CD8-positive, alpha-beta T cell (primary cell): ENCODE measurements at regions of chr6 and their contacts with region 1.

Region 1: DNA sequence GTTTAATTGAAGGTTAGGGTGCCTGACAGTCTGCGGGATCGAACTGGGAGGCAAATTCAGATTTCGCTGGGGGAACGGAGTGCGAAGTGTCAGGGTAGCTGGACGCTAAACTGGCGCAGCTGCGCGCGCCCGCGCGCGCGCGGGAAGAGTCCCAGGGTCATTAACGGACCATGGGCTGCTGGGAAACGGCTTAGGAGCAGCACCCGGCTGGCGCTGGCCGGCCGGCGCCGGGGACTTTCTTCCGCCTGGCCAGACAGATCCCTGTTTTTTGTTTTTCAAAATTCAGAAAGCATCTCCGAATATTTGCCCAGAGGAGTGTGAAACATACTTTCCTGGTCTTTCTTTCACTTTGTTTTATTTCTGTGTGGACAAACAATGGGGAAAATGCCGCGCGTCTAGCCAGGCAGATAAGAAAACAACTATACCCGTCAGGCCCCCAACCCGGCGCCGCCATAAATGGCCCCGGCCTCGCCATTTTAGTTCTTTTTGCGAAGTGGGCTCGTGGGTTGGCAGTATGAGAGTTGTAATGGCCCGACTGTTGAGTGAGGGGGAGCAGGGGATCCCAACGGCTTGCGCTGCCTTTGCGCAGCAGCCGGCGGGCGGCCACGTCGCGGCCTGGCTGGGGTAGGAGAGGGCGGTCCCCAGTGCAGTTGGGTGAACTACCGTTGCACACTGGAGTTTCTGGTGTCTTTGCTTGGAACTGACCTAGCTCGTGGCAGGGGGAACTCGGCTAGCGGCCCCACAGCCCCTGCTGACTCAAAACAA is 7.1 kb downstream of the HSPA1B start:
- DNase-seq: peak; percentile 70 to 89 (median 81)
- ATAC-seq: peak; percentile 75
- H3K4me3 ChIP-seq: peak overlapping the region; percentile 84 to 97
- H3K4me3 Mint-ChIP-seq: peak overlapping the region; percentile 98
- H3K27ac ChIP-seq: peak overlapping the region; percentile 93 to 99
- H3K27ac Mint-ChIP-seq: peak overlapping the region; percentile 99
- H3K4me1 ChIP-seq: peaks cover 42% of the 10 kb centered on the region
- H3K4me1 Mint-ChIP-seq: peaks cover 59% of the 10 kb centered on the region
- H3K27me3 ChIP-seq: no peaks in the 10 kb centered on the region
- H3K27me3 Mint-ChIP-seq: no peaks in the 10 kb centered on the region
- CTCF ChIP-seq: no peak

Region 2: GRCh38 chr6:31665501-31666336 is 168.9 kb before region 1 on chr6 and contains the start of gene CSNK2B:
- CTCF ChIA-PET with region 1: interaction called, 6 read pairs
- POLR2A ChIA-PET with region 1: interaction called, 3 read pairs
- intact Hi-C with region 1: loop called (anchors 1 to 5 kb)
- DNase-seq: peak; percentile 95 to 99 (median 98)
- ATAC-seq: peak; percentile 84
- H3K4me3 ChIP-seq: peak within 1 kb of the TSS; percentile 91 to 94
- H3K4me3 Mint-ChIP-seq: peak within 1 kb of the TSS; percentile 95
- H3K27ac ChIP-seq: peak within 1 kb of the TSS; percentile 96 to 99
- H3K27ac Mint-ChIP-seq: peak within 1 kb of the TSS; percentile 98
- H3K4me1 ChIP-seq: peaks cover 44% of the 10 kb centered on the region
- H3K4me1 Mint-ChIP-seq: peaks cover 56% of the 10 kb centered on the region
- H3K27me3 ChIP-seq: no peaks in the 10 kb centered on the region
- H3K27me3 Mint-ChIP-seq: no peaks in the 10 kb centered on the region
- CTCF ChIP-seq: no peak
- total RNA-seq, gene CSNK2B: 80.9 to 86.1 TPM

Region 3: DNA sequence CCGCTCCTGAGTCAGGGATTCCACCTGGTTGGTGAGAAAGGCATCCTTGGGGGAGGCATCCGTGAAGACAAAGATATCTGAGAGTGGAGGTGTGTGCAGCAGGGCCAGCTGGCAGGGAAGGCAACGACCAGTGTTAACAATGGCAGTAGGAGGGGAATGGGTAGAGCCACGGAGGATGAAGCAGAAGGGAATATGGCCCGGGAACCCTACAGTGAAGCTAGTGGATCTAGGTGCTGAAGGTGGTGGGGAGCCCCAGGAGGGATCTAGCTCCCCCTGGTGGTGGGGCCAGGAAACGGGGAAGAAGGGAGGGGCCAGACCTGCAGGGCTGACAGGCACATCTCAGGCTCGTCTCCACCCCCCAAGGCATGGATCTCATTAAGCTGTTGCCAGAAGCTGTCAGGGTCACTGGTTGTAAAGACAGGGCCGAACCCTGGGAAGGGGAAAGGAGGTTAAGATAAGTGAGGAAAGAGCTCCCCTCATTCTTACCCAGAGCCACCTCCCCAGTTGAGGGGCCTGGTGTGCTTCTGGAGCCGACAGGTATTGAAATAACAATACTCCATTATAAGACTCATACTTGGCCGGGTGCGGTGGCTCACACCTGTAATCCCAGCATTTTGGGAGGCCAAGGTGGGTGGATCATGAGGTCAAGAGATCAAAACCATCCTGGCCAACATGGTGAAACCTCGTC is 64.8 kb before region 1 on chr6:
- CTCF ChIA-PET with region 1: interaction called, 10 read pairs
- POLR2A ChIA-PET with region 1: interaction called, 3 read pairs
- intact Hi-C with region 1: no loop called
- DNase-seq: peak; percentile 63 to 86 (median 80)
- ATAC-seq: peak; percentile 87
- H3K4me3 ChIP-seq: no peak overlapping the region
- H3K4me3 Mint-ChIP-seq: no peak overlapping the region
- H3K27ac ChIP-seq: no peak overlapping the region
- H3K27ac Mint-ChIP-seq: no peak overlapping the region
- H3K4me1 ChIP-seq: peaks cover 25% of the 10 kb centered on the region
- H3K4me1 Mint-ChIP-seq: peaks cover 27% of the 10 kb centered on the region
- H3K27me3 ChIP-seq: no peaks in the 10 kb centered on the region
- H3K27me3 Mint-ChIP-seq: no peaks in the 10 kb centered on the region
- CTCF ChIP-seq: peak; percentile 60

Region 4: DNA sequence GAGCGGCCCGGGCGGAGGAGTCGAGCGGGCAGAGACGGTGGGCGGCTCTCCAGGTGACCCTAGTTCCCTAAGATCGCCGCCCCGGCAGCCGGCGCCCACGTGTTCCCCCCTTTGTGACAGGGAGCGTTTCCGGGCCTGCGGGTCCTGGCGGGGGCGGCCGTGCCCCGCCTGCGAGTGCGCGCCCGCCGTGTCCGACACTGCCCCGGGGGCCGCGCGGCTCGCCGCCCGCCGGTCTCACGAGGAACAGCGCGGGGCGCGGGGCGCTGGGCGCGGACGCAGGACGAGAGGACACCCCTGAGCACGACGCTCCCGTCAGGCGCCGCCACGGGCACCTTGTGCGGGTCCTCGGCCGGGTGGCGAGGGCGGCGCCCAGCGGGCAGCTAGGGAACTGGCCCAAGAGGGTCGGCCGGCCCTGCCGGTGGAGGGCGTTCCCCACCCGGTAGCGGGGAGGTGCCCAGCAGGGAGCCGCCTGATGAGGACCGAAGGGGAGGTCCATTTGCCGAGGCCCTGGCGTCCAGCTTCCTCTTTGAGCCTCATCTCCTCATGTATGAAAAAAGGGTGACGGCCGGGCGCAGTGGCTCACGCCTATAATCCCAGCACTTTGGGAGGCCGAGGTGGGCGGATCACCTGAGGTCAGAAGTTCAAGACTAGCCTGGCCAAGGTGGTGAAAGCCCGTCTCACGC is 38.9 kb before region 1 on chr6 and contains the start of gene VARS1:
- CTCF ChIA-PET with region 1: interaction called, 5 read pairs
- POLR2A ChIA-PET with region 1: interaction called, 8 read pairs
- intact Hi-C with region 1: loop called in 1 of 2 experiments (anchors 2 kb)
- DNase-seq: peak; percentile 68 to 93 (median 83)
- ATAC-seq: peak; percentile 88
- H3K4me3 ChIP-seq: peak within 1 kb of the TSS; percentile 63 to 93
- H3K4me3 Mint-ChIP-seq: peak within 1 kb of the TSS; percentile 94
- H3K27ac ChIP-seq: peak within 1 kb of the TSS; percentile 74 to 83
- H3K27ac Mint-ChIP-seq: peak within 1 kb of the TSS; percentile 98
- H3K4me1 ChIP-seq: peaks cover 44% of the 10 kb centered on the region
- H3K4me1 Mint-ChIP-seq: peaks cover 44% of the 10 kb centered on the region
- H3K27me3 ChIP-seq: no peaks in the 10 kb centered on the region
- H3K27me3 Mint-ChIP-seq: no peaks in the 10 kb centered on the region
- CTCF ChIP-seq: peak; percentile 70
- total RNA-seq, gene VARS1: 29.8 to 33.3 TPM

Region 5: GRCh38 chr6:31822036-31822821 is 12.4 kb before region 1 on chr6:
- CTCF ChIA-PET with region 1: interaction called, 6 read pairs
- POLR2A ChIA-PET with region 1: interaction called, 4 read pairs
- intact Hi-C with region 1: loop called in 1 of 2 experiments (anchors 1 kb)
- DNase-seq: peak in 8 of 9 experiments; percentile 48 to 77 (median 62)
- ATAC-seq: peak; percentile 55
- H3K4me3 ChIP-seq: peak overlapping the region; percentile 86 to 89
- H3K4me3 Mint-ChIP-seq: peak overlapping the region; percentile 95
- H3K27ac ChIP-seq: peak overlapping the region; percentile 66 to 83
- H3K27ac Mint-ChIP-seq: peak overlapping the region; percentile 98
- H3K4me1 ChIP-seq: peaks cover 41% of the 10 kb centered on the region
- H3K4me1 Mint-ChIP-seq: peaks cover 53% of the 10 kb centered on the region
- H3K27me3 ChIP-seq: no peaks in the 10 kb centered on the region
- H3K27me3 Mint-ChIP-seq: no peaks in the 10 kb centered on the region
- CTCF ChIP-seq: no peak

Region 6: DNA sequence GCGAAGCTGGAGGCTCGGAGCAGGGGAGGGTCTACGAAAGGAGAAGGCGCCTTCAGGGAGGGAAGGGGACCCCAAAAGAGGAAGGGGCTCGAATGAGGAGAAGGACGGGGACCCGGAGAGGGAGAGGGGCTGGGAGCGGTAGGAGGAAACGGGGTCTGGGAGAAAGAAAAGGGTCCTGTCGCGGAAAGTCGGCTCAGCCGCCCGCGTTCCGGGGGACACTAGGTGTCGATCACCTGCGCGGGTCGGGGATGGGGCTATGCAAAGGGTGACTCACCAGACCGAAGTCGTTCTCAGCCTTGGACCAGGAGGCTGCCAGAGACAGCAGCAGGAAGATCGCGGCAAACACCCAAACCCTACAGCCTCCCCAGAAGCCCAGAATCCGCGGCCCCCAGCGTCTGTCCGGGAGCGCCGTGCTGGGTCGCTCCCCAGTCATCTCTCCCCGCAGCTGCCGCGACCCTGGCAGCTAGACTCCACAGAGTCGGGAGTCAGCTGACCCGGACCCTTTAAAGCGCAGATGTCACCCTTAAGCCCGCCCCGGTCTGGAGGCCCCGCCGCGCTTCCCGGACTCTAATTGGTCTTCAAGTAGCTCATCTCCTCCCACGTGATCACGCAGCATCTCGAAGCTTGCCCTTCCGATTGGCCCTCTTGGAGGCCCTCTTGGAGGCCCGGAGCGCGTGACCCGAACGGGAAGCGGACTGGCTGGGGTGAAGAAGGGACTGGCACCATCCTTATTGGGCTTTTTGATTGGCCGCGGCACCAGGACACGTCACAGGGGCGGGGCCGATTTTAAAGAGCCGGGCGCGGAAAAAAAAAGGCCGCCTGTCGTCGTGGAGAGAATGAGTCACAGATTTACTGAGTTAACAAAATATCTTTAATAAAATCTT is 28.0 kb after region 1 on chr6 and contains the start of gene NEU1:
- CTCF ChIA-PET with region 1: interaction called, 5 read pairs
- POLR2A ChIA-PET with region 1: interaction called, 7 read pairs
- intact Hi-C with region 1: loop called (anchors 1 kb)
- DNase-seq: peak; percentile 97 to 100 (median 98)
- ATAC-seq: peak; percentile 91
- H3K4me3 ChIP-seq: peak within 1 kb of the TSS; percentile 75 to 94
- H3K4me3 Mint-ChIP-seq: peak within 1 kb of the TSS; percentile 95
- H3K27ac ChIP-seq: peak within 1 kb of the TSS; percentile 77 to 97
- H3K27ac Mint-ChIP-seq: peak within 1 kb of the TSS; percentile 98
- H3K4me1 ChIP-seq: peaks cover 17% of the 10 kb centered on the region
- H3K4me1 Mint-ChIP-seq: peaks cover 23% of the 10 kb centered on the region
- H3K27me3 ChIP-seq: no peaks in the 10 kb centered on the region
- H3K27me3 Mint-ChIP-seq: no peaks in the 10 kb centered on the region
- CTCF ChIP-seq: no peak
- total RNA-seq, gene NEU1: 30.0 to 30.2 TPM

Region 7: DNA sequence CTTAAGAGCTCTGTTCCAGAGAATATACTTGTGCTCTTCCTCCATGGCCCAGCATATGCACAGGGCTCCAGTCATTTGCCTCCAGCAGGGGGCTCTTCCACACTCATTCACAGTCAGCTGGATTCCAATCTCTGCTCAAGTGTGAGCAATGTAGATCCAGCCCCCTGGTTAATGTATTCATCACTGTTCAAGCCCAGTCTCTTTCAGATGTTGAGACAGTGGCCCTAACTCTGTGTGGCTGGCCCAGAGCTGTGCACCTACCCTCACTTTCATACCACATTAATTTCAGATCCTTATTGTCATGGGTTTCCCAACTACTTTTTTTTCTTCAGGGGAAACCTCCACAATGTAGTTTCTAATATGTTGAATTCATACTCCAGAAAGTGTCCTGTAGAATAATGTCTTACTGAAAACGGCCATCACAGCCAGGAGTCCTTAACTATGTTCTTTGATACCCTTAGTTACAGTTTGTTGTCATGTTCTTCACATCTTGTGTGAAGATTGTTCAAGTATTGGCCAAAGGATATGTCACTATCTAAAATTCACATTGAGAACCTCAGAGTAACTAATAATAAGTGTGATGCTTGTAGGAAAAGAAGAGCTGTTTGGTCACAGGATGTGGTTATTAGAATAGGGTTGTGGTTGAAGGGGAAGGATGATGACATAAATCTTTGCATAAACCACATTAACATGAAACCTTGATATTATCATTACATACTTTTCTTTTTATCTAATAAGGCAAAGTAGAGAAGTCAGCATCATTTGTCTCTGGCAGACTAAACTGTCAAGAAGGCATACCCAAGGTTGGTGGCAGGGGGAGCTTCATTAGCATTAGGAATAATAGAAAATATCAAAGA is 788.2 kb after region 1 on chr6:
- CTCF ChIA-PET with region 1: no interaction called
- POLR2A ChIA-PET with region 1: no interaction called
- intact Hi-C with region 1: no loop called
- DNase-seq: peak; percentile 6 to 94 (median 44)
- ATAC-seq: peak; percentile 82
- H3K4me3 ChIP-seq: no peak overlapping the region
- H3K4me3 Mint-ChIP-seq: peak overlapping the region; percentile 6
- H3K27ac ChIP-seq: peak overlapping the region; percentile 60 to 89
- H3K27ac Mint-ChIP-seq: peak overlapping the region; percentile 85
- H3K4me1 ChIP-seq: peaks cover 38% of the 10 kb centered on the region
- H3K4me1 Mint-ChIP-seq: peaks cover 33% of the 10 kb centered on the region
- H3K27me3 ChIP-seq: no peaks in the 10 kb centered on the region
- H3K27me3 Mint-ChIP-seq: no peaks in the 10 kb centered on the region
- CTCF ChIP-seq: peak; percentile 47